IMR-90 (cell line): ENCODE measurements at regions of chr16 and their contacts with region 1.

Region 1: GRCh38 chr16:71484006-71484893 is 4.9 kb downstream of the ZNF19 start:
- DNase-seq: peak; percentile 96
- ATAC-seq: peak; percentile 98
- H3K4me3 ChIP-seq: peak overlapping the region; percentile 72
- H3K27ac ChIP-seq: peak overlapping the region; percentile 91
- H3K4me1 ChIP-seq: no peaks in the 10 kb centered on the region
- H3K27me3 ChIP-seq: no peaks in the 10 kb centered on the region; the same call in 1 of the 2 replicates
- CTCF ChIP-seq: no peak
- POLR2A ChIP-seq: peak; percentile 96
- RAD21 ChIP-seq: 0 out of 2 replicates have a peak, but pooled peaks have one; percentile 2

Region 2: GRCh38 chr16:70778901-70779309 is 705.3 kb before region 1 on chr16:
- CTCF ChIA-PET with region 1: no interaction called
- POLR2A ChIA-PET with region 1: no interaction called
- dilution Hi-C with region 1: no loop called
- in situ Hi-C with region 1: loop called (anchors 25 kb)
- intact Hi-C with region 1: no loop called
- DNase-seq: peak; percentile 92
- ATAC-seq: peak; percentile 89
- H3K4me3 ChIP-seq: no peak overlapping the region
- H3K27ac ChIP-seq: no peak overlapping the region
- H3K4me1 ChIP-seq: peaks cover 3% of the 10 kb centered on the region; the same call in 1 of the 2 replicates
- H3K27me3 ChIP-seq: no peaks in the 10 kb centered on the region
- CTCF ChIP-seq: no peak
- POLR2A ChIP-seq: no peak
- RAD21 ChIP-seq: no peak

Region 3: GRCh38 chr16:71453036-71453435 is 31.2 kb before region 1 on chr16:
- CTCF ChIA-PET with region 1: no interaction called
- POLR2A ChIA-PET with region 1: no interaction called
- dilution Hi-C with region 1: no loop called
- in situ Hi-C with region 1: loop called (anchors 5 kb)
- intact Hi-C with region 1: no loop called
- DNase-seq: peak; percentile 23
- ATAC-seq: no peak
- H3K4me3 ChIP-seq: no peak overlapping the region
- H3K27ac ChIP-seq: no peak overlapping the region
- H3K4me1 ChIP-seq: no peaks in the 10 kb centered on the region
- H3K27me3 ChIP-seq: no peaks in the 10 kb centered on the region
- CTCF ChIP-seq: no peak
- POLR2A ChIP-seq: no peak
- RAD21 ChIP-seq: no peak

Region 4: DNA sequence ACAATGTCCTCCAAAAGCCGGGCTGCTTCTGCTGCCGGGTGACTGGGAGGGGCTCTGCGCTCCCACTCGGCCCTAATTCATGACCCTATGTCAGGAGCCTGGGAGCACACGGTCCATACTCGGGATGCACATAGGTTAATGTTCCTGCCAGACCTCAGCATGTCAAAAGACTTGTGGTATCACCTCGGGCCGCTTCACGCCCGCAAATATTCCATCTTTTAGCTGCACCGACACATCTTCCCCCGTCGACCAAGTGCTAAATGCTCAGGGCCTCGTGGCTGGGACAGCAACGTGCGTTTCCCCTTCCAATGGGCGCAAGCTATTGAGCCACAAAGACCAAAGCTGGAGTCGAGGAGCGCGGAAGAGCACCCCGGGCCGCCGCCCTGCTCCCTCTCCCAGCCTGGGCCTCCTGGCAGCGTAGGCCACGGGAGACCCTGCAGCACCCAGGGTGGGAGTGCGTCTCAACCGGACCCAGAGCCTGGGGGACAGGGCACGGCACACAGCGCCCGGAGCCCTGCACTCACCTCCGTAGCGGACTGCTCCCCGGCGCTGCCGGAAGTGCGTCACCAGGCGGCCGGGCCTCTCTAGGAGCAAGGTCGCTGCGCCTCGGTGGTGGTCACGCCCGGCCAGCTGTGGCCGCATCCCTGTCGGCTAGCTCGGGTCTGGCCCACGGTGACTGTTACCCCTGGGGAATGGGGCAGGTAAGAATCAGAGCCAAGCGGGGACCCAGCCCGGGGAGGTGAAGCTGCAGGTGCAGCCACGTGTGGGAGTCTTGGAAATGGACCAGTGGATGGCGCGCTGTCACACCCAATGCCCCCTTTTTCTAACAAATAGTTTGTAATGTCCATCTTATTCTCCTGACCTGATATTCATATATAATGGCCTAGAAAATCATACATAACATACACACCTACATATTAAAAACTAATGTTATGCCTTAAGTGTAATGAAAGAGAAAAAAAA is 22.3 kb before region 1 on chr16 and contains the start of gene ZNF23:
- CTCF ChIA-PET with region 1: interaction called, 3 read pairs
- POLR2A ChIA-PET with region 1: interaction called, 4 read pairs
- dilution Hi-C with region 1: no loop called
- in situ Hi-C with region 1: no loop called
- intact Hi-C with region 1: loop called (anchors 1 kb)
- DNase-seq: peak; percentile 74
- ATAC-seq: peak; percentile 97
- H3K4me3 ChIP-seq: peak within 1 kb of the TSS; percentile 83
- H3K27ac ChIP-seq: peak within 1 kb of the TSS; percentile 92
- H3K4me1 ChIP-seq: peaks cover 6% of the 10 kb centered on the region
- H3K27me3 ChIP-seq: no peaks in the 10 kb centered on the region
- CTCF ChIP-seq: no peak
- POLR2A ChIP-seq: peak; percentile 86
- RAD21 ChIP-seq: no peak; the same call in 1 of the 2 replicates
- total RNA-seq, gene ZNF23: 8.8 and 11.7 TPM in 2 replicates

Region 5: GRCh38 chr16:71504901-71505300 is 20.7 kb after region 1 on chr16:
- CTCF ChIA-PET with region 1: no interaction called
- POLR2A ChIA-PET with region 1: no interaction called
- dilution Hi-C with region 1: no loop called
- in situ Hi-C with region 1: no loop called
- intact Hi-C with region 1: no loop called
- DNase-seq: no peak
- ATAC-seq: no peak
- H3K4me3 ChIP-seq: no peak overlapping the region
- H3K27ac ChIP-seq: no peak overlapping the region
- H3K4me1 ChIP-seq: no peaks in the 10 kb centered on the region
- H3K27me3 ChIP-seq: no peaks in the 10 kb centered on the region; the same call in 1 of the 2 replicates
- CTCF ChIP-seq: no peak
- POLR2A ChIP-seq: no peak
- RAD21 ChIP-seq: no peak

Region 6: GRCh38 chr16:71537643-71538042 is 53.4 kb after region 1 on chr16:
- CTCF ChIA-PET with region 1: no interaction called
- POLR2A ChIA-PET with region 1: no interaction called
- dilution Hi-C with region 1: no loop called
- in situ Hi-C with region 1: no loop called
- intact Hi-C with region 1: no loop called
- DNase-seq: peak; percentile 41
- ATAC-seq: peak; percentile 87
- H3K4me3 ChIP-seq: no peak overlapping the region
- H3K27ac ChIP-seq: no peak overlapping the region
- H3K4me1 ChIP-seq: no peaks in the 10 kb centered on the region
- H3K27me3 ChIP-seq: no peaks in the 10 kb centered on the region
- CTCF ChIP-seq: peak; percentile 49
- POLR2A ChIP-seq: no peak
- RAD21 ChIP-seq: peak; percentile 50

Region 7: DNA sequence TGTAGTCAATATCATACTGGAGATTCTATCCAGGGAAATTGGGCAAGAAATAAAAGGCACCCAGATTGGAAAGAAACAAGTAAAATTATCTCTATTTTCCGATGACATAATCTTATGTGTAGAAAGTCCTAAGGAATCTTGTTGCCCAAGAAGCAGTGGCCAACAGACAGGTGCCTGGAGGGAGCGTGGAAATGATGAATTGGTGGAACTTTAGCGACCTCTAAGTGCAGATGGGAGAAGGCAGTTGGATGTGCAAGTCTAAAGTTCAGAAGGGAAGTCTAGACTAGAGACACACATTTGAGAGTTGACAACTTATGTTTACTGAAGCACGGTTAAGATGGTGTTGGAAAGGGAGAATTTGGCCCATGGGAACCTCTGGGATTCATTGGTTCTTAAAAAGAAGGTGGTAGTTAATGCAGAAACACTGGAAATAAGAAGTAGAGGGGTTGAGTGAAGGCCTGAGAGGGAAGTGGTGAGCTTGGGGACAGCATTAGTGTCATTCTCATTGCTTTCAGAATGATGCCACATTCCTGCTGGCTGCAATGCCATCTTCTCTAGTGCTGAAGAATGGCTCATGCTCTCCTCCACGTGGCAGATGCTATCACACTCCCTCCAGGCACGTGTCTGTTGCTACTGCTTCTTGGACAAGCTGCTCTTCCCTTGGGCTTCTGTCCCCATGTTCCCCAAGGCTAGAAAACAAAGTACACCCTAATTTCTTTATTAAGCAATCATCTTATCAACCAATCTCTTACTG is 68.6 kb after region 1 on chr16:
- CTCF ChIA-PET with region 1: no interaction called
- POLR2A ChIA-PET with region 1: no interaction called
- dilution Hi-C with region 1: no loop called
- in situ Hi-C with region 1: no loop called
- intact Hi-C with region 1: no loop called
- DNase-seq: no peak
- ATAC-seq: no peak
- H3K4me3 ChIP-seq: no peak overlapping the region
- H3K27ac ChIP-seq: no peak overlapping the region
- H3K4me1 ChIP-seq: no peaks in the 10 kb centered on the region
- H3K27me3 ChIP-seq: no peaks in the 10 kb centered on the region; the same call in 1 of the 2 replicates
- CTCF ChIP-seq: no peak
- POLR2A ChIP-seq: no peak
- RAD21 ChIP-seq: no peak